ENCODE measurements at regions of chr13 and their contacts with region 1.

Region 1: GRCh38 chr13:28679628-28680027 is 20.7 kb downstream of the POMP start:
- ATAC-seq: peak in 3 of 8 experiments; percentile 16 to 33 (median 27)
- H3K4me3 ChIP-seq: no peak overlapping the region
- H3K27ac ChIP-seq: no peak overlapping the region
- H3K4me1 ChIP-seq: no peaks in the 10 kb centered on the region

Region 2: DNA sequence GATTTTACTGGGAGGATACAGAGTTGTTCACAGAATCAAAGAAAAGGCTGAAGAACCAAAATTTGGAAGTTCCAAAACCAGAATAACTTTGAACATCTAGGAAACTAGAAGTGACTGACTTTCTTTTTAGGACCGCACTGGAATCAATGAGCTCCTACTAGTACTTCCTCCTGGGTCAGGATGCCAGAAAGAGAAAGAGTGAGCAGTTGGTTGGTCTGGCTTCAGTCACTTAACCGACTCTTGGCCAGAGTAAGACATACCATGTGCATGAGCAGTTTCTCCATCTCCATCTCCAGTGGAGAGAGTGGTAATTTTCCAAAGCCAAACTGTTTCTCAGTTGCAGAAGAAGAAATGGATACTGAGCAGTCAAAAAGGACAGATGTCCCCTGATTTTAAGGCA is 113.4 kb after region 1 on chr13:
- in situ Hi-C with region 1: loop called in 3 of 9 experiments (anchors 10 to 25 kb)
- ATAC-seq: peak in 2 of 8 experiments; percentile 18 to 60
- H3K4me3 ChIP-seq: no peak overlapping the region
- H3K27ac ChIP-seq: no peak overlapping the region
- H3K4me1 ChIP-seq: peaks cover 0 to 2% of the 10 kb centered on the region in 2 donors

Measured in motor neuron (in vitro differentiated cells).